MCF 10A (cell line): ENCODE measurements at regions of chr1 and their contacts with region 1.

Region 1: GRCh38 chr1:184805667-184806295 is 51.1 kb upstream of the EDEM3 start:
- DNase-seq: peak; percentile 95
- H3K4me3 Mint-ChIP-seq: no peak overlapping the region
- H3K27ac Mint-ChIP-seq: no peak overlapping the region
- H3K4me1 Mint-ChIP-seq: peaks cover 6% of the 10 kb centered on the region
- H3K27me3 Mint-ChIP-seq: peaks cover 46% of the 10 kb centered on the region
- CTCF ChIP-seq: peak; percentile 99

Region 2: GRCh38 chr1:184822267-184822666 is 16.5 kb after region 1 on chr1:
- CTCF ChIA-PET with region 1: interaction called, 41 read pairs
- POLR2A ChIA-PET with region 1: interaction called, 3 read pairs
- intact Hi-C with region 1: no loop called
- DNase-seq: peak; percentile 16
- H3K4me3 Mint-ChIP-seq: no peak overlapping the region
- H3K27ac Mint-ChIP-seq: no peak overlapping the region
- H3K4me1 Mint-ChIP-seq: no peaks in the 10 kb centered on the region
- H3K27me3 Mint-ChIP-seq: peaks cover 86% of the 10 kb centered on the region
- CTCF ChIP-seq: no peak

Region 3: DNA sequence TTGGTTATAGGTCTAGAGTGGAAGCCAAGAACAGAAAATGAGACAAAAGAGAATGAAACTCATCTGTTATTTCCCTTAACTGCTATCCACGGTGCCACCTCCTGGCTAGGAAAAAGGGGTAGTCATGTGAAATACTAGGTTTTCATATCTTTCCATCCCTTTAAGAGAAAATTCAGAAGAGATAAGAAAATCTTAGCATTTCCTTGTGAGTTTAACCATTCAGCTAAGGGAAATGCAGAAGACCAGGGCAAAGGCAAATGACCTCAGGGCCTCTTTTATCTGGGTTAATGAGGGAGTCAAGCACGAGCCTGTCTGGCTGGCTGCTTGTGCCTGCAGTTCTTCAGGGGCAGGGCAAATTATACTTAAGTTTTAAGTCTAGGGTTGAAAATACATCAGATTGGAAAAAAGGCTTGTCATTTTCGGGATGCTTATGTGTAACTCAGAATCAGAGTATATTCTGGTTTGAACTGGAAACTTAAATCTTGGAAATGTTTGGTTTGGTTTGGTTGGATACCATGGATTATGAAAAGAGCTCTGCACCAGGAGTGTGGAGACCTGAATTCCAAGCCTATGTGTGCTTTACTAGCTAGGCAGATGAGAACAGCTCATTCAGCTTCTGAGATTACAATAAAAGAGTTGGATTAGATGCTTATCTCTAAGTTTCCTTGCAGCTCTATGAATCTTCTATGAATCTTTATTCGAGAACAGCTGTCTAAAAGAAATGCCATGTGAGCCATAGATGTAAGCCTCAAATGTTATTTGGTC is 148.6 kb after region 1 on chr1:
- CTCF ChIA-PET with region 1: interaction called, 10 read pairs
- POLR2A ChIA-PET with region 1: no interaction called
- intact Hi-C with region 1: no loop called
- DNase-seq: peak; percentile 21
- H3K4me3 Mint-ChIP-seq: no peak overlapping the region
- H3K27ac Mint-ChIP-seq: no peak overlapping the region
- H3K4me1 Mint-ChIP-seq: peaks cover 10% of the 10 kb centered on the region
- H3K27me3 Mint-ChIP-seq: peaks cover 23% of the 10 kb centered on the region
- CTCF ChIP-seq: no peak

Region 4: GRCh38 chr1:184982002-184982954 is 176.5 kb after region 1 on chr1:
- CTCF ChIA-PET with region 1: interaction called, 270 read pairs
- POLR2A ChIA-PET with region 1: interaction called, 15 read pairs
- intact Hi-C with region 1: loop called (anchors 1 kb)
- DNase-seq: peak; percentile 82
- H3K4me3 Mint-ChIP-seq: no peak overlapping the region
- H3K27ac Mint-ChIP-seq: no peak overlapping the region
- H3K4me1 Mint-ChIP-seq: no peaks in the 10 kb centered on the region
- H3K27me3 Mint-ChIP-seq: peaks cover 82% of the 10 kb centered on the region
- CTCF ChIP-seq: peak; percentile 97

Region 5: GRCh38 chr1:185229981-185230380 is 424.2 kb after region 1 on chr1:
- CTCF ChIA-PET with region 1: no interaction called
- POLR2A ChIA-PET with region 1: no interaction called
- intact Hi-C with region 1: no loop called
- DNase-seq: no peak
- H3K4me3 Mint-ChIP-seq: no peak overlapping the region
- H3K27ac Mint-ChIP-seq: no peak overlapping the region
- H3K4me1 Mint-ChIP-seq: no peaks in the 10 kb centered on the region
- H3K27me3 Mint-ChIP-seq: no peaks in the 10 kb centered on the region
- CTCF ChIP-seq: no peak

Region 6: DNA sequence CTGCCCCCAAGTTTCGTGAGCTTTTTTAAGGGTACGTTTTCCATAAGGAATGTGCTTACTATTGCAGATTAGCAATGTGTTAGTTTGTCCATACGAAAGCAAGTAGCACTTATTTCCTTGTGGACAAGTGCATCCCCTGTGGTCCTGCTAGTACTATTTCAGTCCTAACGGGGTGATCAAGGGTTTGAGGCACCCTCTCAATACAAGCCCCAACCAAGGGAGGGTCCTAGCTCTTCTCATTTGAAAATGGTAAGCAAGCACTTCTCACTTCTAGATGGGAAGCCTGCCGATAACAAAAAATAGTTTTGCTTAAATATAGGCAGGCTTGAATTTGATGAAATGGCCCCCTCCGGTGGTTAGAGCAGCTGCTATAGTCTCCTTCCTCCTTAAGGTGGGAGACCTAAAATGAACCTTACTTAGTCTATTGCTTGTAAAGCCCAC is 864.4 kb after region 1 on chr1:
- CTCF ChIA-PET with region 1: interaction called, 13 read pairs
- POLR2A ChIA-PET with region 1: no interaction called
- intact Hi-C with region 1: no loop called
- DNase-seq: peak; percentile 69
- H3K4me3 Mint-ChIP-seq: no peak overlapping the region
- H3K27ac Mint-ChIP-seq: no peak overlapping the region
- H3K4me1 Mint-ChIP-seq: no peaks in the 10 kb centered on the region
- H3K27me3 Mint-ChIP-seq: no peaks in the 10 kb centered on the region
- CTCF ChIP-seq: peak; percentile 78